ENCODE measurements at regions of chr22 and their contacts with region 1.

Region 1: GRCh38 chr22:36301384-36301828 is 48.5 kb downstream of the APOL1 start:
- DNase-seq: peak; percentile 87
- H3K4me3 Mint-ChIP-seq: no peak overlapping the region
- H3K27ac Mint-ChIP-seq: peak overlapping the region; percentile 74
- H3K4me1 Mint-ChIP-seq: peaks cover 12% of the 10 kb centered on the region
- H3K27me3 Mint-ChIP-seq: peaks cover 3% of the 10 kb centered on the region

Region 2: DNA sequence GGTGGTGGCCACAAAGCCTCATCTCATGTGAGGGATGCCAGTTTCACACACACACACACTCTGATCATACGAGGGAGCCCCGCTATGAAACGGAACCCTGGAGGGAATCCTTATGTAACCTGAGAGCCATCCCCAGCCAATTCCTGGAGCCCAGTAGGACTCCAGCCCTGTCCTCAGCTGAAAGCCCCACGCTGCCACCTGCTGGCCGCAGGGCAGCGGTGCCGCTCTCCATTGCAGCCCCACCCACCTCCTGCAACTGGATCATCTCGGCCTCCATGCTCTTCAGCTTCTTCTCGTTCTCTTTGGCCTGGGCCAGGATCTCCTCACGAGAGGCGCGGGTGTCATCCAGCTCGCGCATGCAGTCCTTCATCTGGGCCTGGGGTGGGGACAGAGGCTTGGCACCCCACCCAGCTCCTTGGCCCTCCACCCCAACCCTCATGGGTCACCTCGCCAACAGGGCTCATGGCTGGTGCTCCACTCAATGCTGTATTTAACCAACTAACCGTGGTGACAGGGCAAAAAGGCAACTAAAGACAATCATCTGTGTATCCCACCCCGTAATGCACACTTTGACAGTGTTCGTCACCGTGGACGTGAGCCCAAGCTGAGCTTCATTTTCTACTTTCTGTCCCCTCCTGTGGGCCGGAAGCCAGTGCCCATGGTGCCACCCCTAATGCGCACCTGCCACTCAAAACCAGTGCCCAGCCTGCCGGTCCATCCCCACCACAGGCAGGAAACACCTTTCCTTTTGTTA is 14.8 kb before region 1 on chr22:
- CTCF ChIA-PET with region 1: interaction called, 25 read pairs
- DNase-seq: peak; percentile 74
- H3K4me3 Mint-ChIP-seq: no peak overlapping the region
- H3K27ac Mint-ChIP-seq: peak overlapping the region; percentile 86
- H3K4me1 Mint-ChIP-seq: peaks cover 46% of the 10 kb centered on the region
- H3K27me3 Mint-ChIP-seq: no peaks in the 10 kb centered on the region

Region 3: GRCh38 chr22:36311386-36312358 is 10.3 kb after region 1 on chr22:
- CTCF ChIA-PET with region 1: interaction called, 33 read pairs
- DNase-seq: no peak
- H3K4me3 Mint-ChIP-seq: no peak overlapping the region
- H3K27ac Mint-ChIP-seq: no peak overlapping the region
- H3K4me1 Mint-ChIP-seq: peaks cover 3% of the 10 kb centered on the region
- H3K27me3 Mint-ChIP-seq: no peaks in the 10 kb centered on the region